AG04450 (cell line): ENCODE measurements at regions of chr16 and their contacts with region 1.

Region 1: DNA sequence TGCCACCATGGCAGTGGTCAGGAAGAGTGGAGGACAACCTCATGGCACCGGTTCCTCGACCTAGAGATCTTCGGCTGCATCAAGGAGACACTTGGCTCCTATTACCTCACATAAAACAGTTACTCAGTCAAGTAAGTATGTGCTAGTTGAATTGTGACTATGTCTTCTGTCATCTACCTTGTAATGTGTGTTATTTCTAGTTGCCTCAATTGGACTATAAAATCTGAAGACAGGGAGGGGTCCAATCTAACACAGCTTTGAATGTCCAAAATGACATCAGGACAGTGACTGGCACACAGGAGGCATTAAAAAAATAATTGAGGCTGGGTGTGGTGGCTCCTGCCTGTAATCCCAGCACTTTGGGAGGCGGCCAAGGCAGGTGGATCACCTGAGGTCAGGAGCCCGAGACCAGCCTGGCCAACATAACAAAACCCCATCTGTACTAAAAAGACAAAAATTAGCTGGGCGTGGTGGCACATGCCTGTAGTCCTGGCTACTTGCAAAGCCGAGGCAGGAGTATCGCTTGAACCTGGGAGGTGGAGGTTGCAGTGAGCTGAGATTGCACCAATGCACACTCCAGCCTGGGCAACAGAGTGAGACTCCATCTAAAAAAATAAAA is 17.3 kb downstream of the C16orf86 start:
- DNase-seq: no peak
- H3K4me3 ChIP-seq: no peak overlapping the region
- H3K27ac ChIP-seq: no peak overlapping the region
- H3K27me3 ChIP-seq: no peaks in the 10 kb centered on the region
- CTCF ChIP-seq: no peak

Region 2: GRCh38 chr16:67447508-67448076 is 236.3 kb before region 1 on chr16:
- CTCF ChIA-PET with region 1: no interaction called
- POLR2A ChIA-PET with region 1: no interaction called
- DNase-seq: peak; percentile 37
- H3K4me3 ChIP-seq: no peak overlapping the region
- H3K27ac ChIP-seq: peak overlapping the region; percentile 47
- H3K27me3 ChIP-seq: no peaks in the 10 kb centered on the region
- CTCF ChIP-seq: peak; percentile 55

Region 3: GRCh38 chr16:67672739-67673662 is 10.9 kb before region 1 on chr16:
- CTCF ChIA-PET with region 1: interaction called, 17 read pairs
- POLR2A ChIA-PET with region 1: no interaction called
- DNase-seq: peak; percentile 56
- H3K4me3 ChIP-seq: no peak overlapping the region
- H3K27ac ChIP-seq: no peak overlapping the region
- H3K27me3 ChIP-seq: no peaks in the 10 kb centered on the region
- CTCF ChIP-seq: peak; percentile 83

Region 4: DNA sequence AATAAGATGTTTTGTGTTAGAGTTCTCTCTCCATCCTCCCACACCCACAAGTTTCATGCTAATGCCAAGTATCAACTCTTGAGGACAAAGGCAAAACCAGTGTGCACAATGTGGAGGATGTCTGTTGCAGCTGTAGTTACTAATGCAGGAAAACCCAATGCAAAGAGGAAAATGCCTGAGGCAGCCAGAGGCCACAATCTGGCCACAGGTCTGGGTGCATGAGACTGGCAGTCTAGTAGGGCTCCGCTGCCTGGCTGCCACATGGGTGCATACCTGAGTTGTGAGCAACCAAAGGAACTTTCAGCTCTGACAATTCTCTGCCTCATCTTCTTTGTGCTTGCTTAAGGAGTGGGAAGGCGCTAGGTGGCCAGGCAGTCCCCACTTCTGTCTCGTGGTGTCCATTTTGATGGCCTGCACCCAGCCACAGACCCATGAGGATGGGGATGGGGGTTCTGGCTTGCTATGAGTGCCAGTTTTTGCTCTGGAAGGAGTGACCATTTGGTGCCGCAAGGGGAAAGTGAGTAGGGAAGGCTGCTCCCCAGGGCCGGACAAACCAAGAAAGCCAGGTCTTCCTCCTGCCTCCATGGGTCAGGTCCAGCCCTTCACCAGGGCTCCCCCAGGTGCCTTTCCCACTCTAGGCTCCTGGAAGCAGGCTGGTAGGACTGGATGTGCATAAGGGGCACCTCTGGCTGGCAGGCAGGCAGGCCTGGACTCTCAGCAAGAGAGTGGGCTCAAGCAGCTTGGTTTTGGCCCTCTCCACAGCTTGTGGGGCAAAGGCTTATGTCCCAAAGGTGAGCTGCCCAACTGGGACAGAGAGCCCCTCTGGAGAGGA is 39.5 kb after region 1 on chr16:
- CTCF ChIA-PET with region 1: no interaction called
- POLR2A ChIA-PET with region 1: no interaction called
- DNase-seq: peak; percentile 18
- H3K4me3 ChIP-seq: no peak overlapping the region
- H3K27ac ChIP-seq: peak overlapping the region; percentile 21
- H3K27me3 ChIP-seq: no peaks in the 10 kb centered on the region
- CTCF ChIP-seq: no peak